HCT116 (cell line): ENCODE measurements at regions of chrX and their contacts with region 1.

Region 1: GRCh38 chrX:40058719-40059118 is 39.0 kb downstream of the BCOR start:
- DNase-seq: no peak
- ATAC-seq: no peak
- H3K4me3 ChIP-seq: no peak overlapping the region
- H3K27ac ChIP-seq: no peak overlapping the region
- H3K4me1 ChIP-seq: no peaks in the 10 kb centered on the region
- H3K27me3 ChIP-seq: no peaks in the 10 kb centered on the region
- CTCF ChIP-seq: no peak
- POLR2A ChIP-seq: no peak
- RAD21 ChIP-seq: no peak

Region 2: DNA sequence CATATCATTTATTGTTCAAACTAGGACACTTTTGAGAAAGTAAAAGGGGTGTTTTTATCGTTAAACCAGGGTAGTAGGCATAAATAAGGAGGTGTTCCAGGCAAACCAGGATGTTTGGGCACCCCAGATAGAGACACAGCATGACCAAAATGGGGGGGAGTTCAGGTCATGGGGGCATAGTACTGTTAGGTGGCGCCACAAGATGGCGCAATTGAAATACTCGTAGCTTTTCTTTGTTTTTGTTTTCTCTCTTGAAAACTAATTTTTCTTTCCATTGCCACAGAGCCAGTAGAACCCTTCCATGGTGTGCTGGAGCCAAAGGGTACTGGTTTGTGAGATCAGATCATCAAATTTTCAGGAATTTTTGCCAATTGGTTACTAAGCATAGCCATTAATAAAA is 244.3 kb before region 1 on chrX:
- CTCF ChIA-PET with region 1: no interaction called
- POLR2A ChIA-PET with region 1: no interaction called
- RAD21 ChIA-PET with region 1: no interaction called
- intact Hi-C with region 1: loop called (anchors 10 kb)
- DNase-seq: peak; percentile 15
- ATAC-seq: peak; percentile 73
- H3K4me3 ChIP-seq: no peak overlapping the region
- H3K27ac ChIP-seq: no peak overlapping the region
- H3K4me1 ChIP-seq: no peaks in the 10 kb centered on the region
- H3K27me3 ChIP-seq: no peaks in the 10 kb centered on the region
- CTCF ChIP-seq: peak; percentile 45 to 55 (median 48); a peak in 5 of 6 replicates
- POLR2A ChIP-seq: no peak
- RAD21 ChIP-seq: peak; percentile 78

Region 3: GRCh38 chrX:39936886-39937770 is 121.6 kb before region 1 on chrX:
- CTCF ChIA-PET with region 1: no interaction called
- POLR2A ChIA-PET with region 1: no interaction called
- RAD21 ChIA-PET with region 1: no interaction called
- intact Hi-C with region 1: no loop called
- DNase-seq: no peak
- ATAC-seq: no peak
- H3K4me3 ChIP-seq: no peak overlapping the region
- H3K27ac ChIP-seq: no peak overlapping the region
- H3K4me1 ChIP-seq: peaks cover 0 to 4% of the 10 kb centered on the region in 2 experiments; a peak in 1 of 4 replicates
- H3K27me3 ChIP-seq: no peaks in the 10 kb centered on the region
- CTCF ChIP-seq: no peak
- POLR2A ChIP-seq: no peak
- RAD21 ChIP-seq: no peak